ENCODE measurements at regions of chr1 and their contacts with region 1.

Region 1: DNA sequence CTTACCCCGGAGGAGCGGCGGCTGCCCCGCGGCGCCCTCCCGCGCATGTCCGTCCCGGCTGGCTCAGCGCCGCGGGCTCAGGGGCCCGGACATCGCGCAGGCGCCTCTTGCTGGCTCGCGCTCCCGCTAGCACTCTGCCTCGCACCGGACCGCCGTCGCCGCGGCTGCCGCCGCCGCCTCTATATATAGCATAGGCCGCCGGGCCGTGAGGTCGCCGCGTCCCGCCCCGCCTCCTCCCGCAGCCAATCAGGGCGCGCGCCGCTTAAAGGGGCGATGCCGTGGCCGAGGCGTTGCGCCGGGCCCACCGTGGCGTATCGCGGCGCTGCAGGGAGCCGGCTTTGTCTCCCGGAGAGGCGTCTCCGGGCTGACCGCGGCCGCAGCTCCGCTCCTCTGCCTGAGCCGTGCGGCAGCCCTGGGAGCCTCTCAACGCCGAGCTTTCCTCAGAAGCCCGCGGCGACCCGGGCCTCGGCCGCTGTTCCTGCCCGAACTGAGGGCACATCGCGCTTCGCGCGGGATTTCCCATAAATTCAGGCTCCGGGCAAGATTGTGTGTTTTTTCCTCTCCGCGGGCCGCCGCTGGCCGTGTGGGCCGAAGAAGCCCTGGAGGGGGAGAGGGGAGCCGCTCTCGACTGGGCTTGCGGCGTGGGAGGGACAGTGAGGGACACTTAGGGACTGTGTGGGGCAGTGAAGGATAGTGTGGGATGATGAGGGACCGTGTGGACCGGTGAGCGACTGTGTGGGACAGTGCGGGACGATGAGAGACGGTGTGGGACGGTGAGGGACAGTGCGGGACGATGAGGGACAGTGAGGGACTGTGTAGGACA is at the start of gene ERRFI1:
- DNase-seq: peak; percentile 86
- ATAC-seq: peak; percentile 82
- H3K4me3 ChIP-seq: peak within 1 kb of the TSS; percentile 94 to 100 (median 95)
- H3K27ac ChIP-seq: peak within 1 kb of the TSS; percentile 99
- H3K4me1 ChIP-seq: peaks cover 29% of the 10 kb centered on the region
- H3K27me3 ChIP-seq: peaks cover 0 to 5% of the 10 kb centered on the region in 2 experiments; a peak in 1 of 5 replicates
- CTCF ChIP-seq: peak; percentile 21; the same call in 1 of the 2 replicates
- EP300 ChIP-seq: no peak
- POLR2A ChIP-seq: peak; percentile 95 to 97
- RAD21 ChIP-seq: peak; percentile 59
- total RNA-seq, gene ERRFI1: 84.4 and 99.5 TPM in 2 replicates

Region 2: DNA sequence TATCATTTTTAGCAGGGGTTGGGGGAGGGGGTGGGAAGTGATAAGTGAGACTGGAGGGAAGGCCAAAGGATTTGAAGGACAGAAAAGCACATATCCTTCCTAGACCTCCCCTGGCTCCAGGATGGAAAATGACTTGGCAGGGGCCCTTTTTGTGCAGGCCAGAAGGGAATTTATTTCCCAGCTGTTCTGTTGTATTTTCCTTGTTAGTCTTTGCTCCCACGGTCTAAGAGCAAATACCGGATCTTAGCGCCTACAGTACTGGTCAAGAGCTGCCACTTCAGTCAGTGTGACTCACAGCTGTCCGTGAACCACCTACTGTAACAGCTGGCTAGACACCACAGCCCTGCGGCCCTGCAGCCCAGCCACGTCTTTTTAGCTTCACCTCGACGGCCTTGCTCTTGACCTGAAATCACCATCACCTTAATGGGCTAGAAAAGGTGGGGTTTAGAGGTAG is 50.8 kb after region 1 on chr1:
- CTCF ChIA-PET with region 1: no interaction called
- POLR2A ChIA-PET with region 1: interaction called, 37 read pairs
- in situ Hi-C with region 1: no loop called
- intact Hi-C with region 1: loop called (anchors 5 kb)
- DNase-seq: peak; percentile 93
- ATAC-seq: peak; percentile 99
- H3K4me3 ChIP-seq: peak overlapping the region; percentile 36 to 50 (median 47); a peak in 5 of 6 replicates
- H3K27ac ChIP-seq: peak overlapping the region; percentile 57
- H3K4me1 ChIP-seq: peaks cover 89% of the 10 kb centered on the region
- H3K27me3 ChIP-seq: no peaks in the 10 kb centered on the region
- CTCF ChIP-seq: 0 out of 2 replicates have a peak, but pooled peaks have one; percentile 10
- EP300 ChIP-seq: peak in 1 of 2 experiments; percentile 62; a peak in 2 of 4 replicates
- POLR2A ChIP-seq: peak; percentile 22 to 55; a peak in 1 of 4 replicates
- RAD21 ChIP-seq: peak; percentile 26; the same call in 1 of the 2 replicates

Region 3: GRCh38 chr1:8137481-8138244 is 111.3 kb after region 1 on chr1:
- CTCF ChIA-PET with region 1: no interaction called
- POLR2A ChIA-PET with region 1: interaction called, 20 read pairs
- in situ Hi-C with region 1: loop called (anchors 25 kb)
- intact Hi-C with region 1: no loop called
- DNase-seq: peak; percentile 68
- ATAC-seq: peak; percentile 47; the same call in 1 of the 3 replicates
- H3K4me3 ChIP-seq: peak overlapping the region in 1 of 3 experiments; percentile 32; a peak in 2 of 6 replicates
- H3K27ac ChIP-seq: peak overlapping the region; percentile 30
- H3K4me1 ChIP-seq: peaks cover 74% of the 10 kb centered on the region
- H3K27me3 ChIP-seq: no peaks in the 10 kb centered on the region
- CTCF ChIP-seq: no peak
- EP300 ChIP-seq: peak in 1 of 2 experiments; percentile 27; a peak in 1 of 4 replicates
- POLR2A ChIP-seq: no peak
- RAD21 ChIP-seq: no peak

Region 4: DNA sequence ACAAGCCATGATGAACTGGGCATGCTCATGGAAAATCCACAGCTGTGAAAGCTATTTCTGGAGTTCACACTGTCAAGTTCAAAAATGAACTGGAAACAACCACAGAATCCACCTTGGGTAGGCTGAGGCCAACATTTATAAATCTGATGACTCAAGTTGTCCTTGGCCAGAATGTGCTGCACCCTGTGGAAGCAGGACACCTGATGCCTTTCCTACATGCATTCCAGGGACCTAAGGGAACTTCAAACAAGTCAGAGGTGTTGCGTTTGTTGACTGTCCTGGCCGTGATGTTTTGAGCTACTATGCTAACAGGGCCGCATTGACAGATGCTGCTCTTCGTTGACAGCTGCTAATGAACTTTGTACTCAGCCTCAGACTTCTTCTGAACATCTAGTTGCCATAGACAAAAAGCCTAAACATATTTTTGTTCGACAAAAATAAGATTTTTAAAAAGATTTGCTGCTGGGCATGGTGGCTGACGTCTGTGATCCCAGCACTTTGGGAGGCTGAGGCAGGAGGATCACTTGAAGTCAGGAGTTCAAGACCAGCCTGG is 163.6 kb after region 1 on chr1:
- CTCF ChIA-PET with region 1: no interaction called
- POLR2A ChIA-PET with region 1: interaction called, 27 read pairs
- in situ Hi-C with region 1: no loop called
- intact Hi-C with region 1: no loop called
- DNase-seq: peak; percentile 100
- ATAC-seq: peak; percentile 100
- H3K4me3 ChIP-seq: no peak overlapping the region
- H3K27ac ChIP-seq: peak overlapping the region; percentile 74
- H3K4me1 ChIP-seq: peaks cover 78% of the 10 kb centered on the region
- H3K27me3 ChIP-seq: no peaks in the 10 kb centered on the region
- CTCF ChIP-seq: peak; percentile 8; the same call in 1 of the 2 replicates
- EP300 ChIP-seq: peak; percentile 87 to 97
- POLR2A ChIP-seq: peak in 1 of 2 experiments; percentile 47; a peak in 1 of 4 replicates
- RAD21 ChIP-seq: peak; percentile 65

Region 5: DNA sequence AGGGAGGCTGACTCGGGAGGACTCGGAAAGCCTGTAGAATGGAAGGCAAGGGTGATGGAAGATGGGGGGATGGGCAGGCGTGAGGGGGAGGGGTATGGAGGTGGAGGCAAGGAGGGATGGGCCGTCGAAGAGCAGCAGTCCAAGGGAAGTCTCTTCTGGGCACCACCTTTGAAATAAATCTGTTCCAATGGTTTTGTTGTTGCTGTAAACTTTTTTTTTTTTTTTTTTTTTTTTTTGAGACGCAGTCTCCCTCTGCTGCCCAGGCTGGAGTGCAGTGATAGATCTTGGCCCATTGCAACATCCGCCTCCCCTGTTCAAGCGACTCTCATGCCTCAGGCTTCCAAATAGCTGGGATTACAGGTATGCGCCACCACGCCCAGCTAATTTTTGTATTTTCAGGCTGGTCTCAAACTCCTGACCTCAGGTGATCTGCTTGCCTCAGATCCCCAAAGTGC is 212.5 kb after region 1 on chr1:
- CTCF ChIA-PET with region 1: no interaction called
- POLR2A ChIA-PET with region 1: interaction called, 30 read pairs
- in situ Hi-C with region 1: loop called (anchors 10 kb)
- intact Hi-C with region 1: loop called (anchors 2 kb)
- DNase-seq: peak; percentile 79
- ATAC-seq: peak; percentile 57
- H3K4me3 ChIP-seq: peak overlapping the region in 2 of 3 experiments; percentile 2 to 42; a peak in 3 of 6 replicates
- H3K27ac ChIP-seq: peak overlapping the region; percentile 84
- H3K4me1 ChIP-seq: peaks cover 58% of the 10 kb centered on the region
- H3K27me3 ChIP-seq: no peaks in the 10 kb centered on the region
- CTCF ChIP-seq: peak; percentile 53; the same call in 1 of the 2 replicates
- EP300 ChIP-seq: no peak; a peak in 1 of 4 replicates
- POLR2A ChIP-seq: no peak
- RAD21 ChIP-seq: no peak

Region 6: GRCh38 chr1:8267307-8267706 is 240.9 kb after region 1 on chr1:
- CTCF ChIA-PET with region 1: no interaction called
- POLR2A ChIA-PET with region 1: no interaction called
- in situ Hi-C with region 1: no loop called
- intact Hi-C with region 1: no loop called
- DNase-seq: no peak
- ATAC-seq: no peak
- H3K4me3 ChIP-seq: no peak overlapping the region
- H3K27ac ChIP-seq: no peak overlapping the region
- H3K4me1 ChIP-seq: peaks cover 34% of the 10 kb centered on the region
- H3K27me3 ChIP-seq: no peaks in the 10 kb centered on the region
- CTCF ChIP-seq: no peak
- EP300 ChIP-seq: no peak
- POLR2A ChIP-seq: no peak
- RAD21 ChIP-seq: no peak